Ovary (tissue), 10 donors: ENCODE measurements at regions of chr4 and their contacts with region 1.

Region 1: GRCh38 chr4:130901321-130901720 is 1805.4 kb downstream of the C4orf33 start:
- DNase-seq: no peak
- H3K4me3 ChIP-seq: no peak overlapping the region
- H3K27ac ChIP-seq: no peak overlapping the region
- H3K4me1 ChIP-seq: no peaks in the 10 kb centered on the region
- H3K27me3 ChIP-seq: no peaks in the 10 kb centered on the region
- CTCF ChIP-seq: no peak
- EP300 ChIP-seq: no peak
- POLR2A ChIP-seq: no peak

Region 2: GRCh38 chr4:130689181-130689580 is 212.1 kb before region 1 on chr4:
- intact Hi-C with region 1: loop called in 1 of 4 experiments (anchors 10 kb)
- DNase-seq: no peak
- H3K4me3 ChIP-seq: no peak overlapping the region
- H3K27ac ChIP-seq: no peak overlapping the region
- H3K4me1 ChIP-seq: no peaks in the 10 kb centered on the region
- H3K27me3 ChIP-seq: no peaks in the 10 kb centered on the region
- CTCF ChIP-seq: no peak
- EP300 ChIP-seq: no peak
- POLR2A ChIP-seq: no peak

Region 3: GRCh38 chr4:130955520-130955919 is 54.2 kb after region 1 on chr4:
- intact Hi-C with region 1: no loop called
- DNase-seq: no peak
- H3K4me3 ChIP-seq: no peak overlapping the region
- H3K27ac ChIP-seq: no peak overlapping the region
- H3K4me1 ChIP-seq: no peaks in the 10 kb centered on the region
- H3K27me3 ChIP-seq: no peaks in the 10 kb centered on the region
- CTCF ChIP-seq: no peak
- EP300 ChIP-seq: no peak
- POLR2A ChIP-seq: no peak